ENCODE measurements at regions of chr13 and their contacts with region 1.

Region 1: GRCh38 chr13:32639502-32640105 is 53.4 kb downstream of the PDS5B start:
- DNase-seq: no peak
- ATAC-seq: peak; percentile 79
- H3K4me3 Mint-ChIP-seq: no peak overlapping the region
- H3K27ac Mint-ChIP-seq: no peak overlapping the region
- H3K4me1 Mint-ChIP-seq: peaks cover 42% of the 10 kb centered on the region
- H3K27me3 Mint-ChIP-seq: no peaks in the 10 kb centered on the region
- CTCF ChIP-seq: no peak

Region 2: GRCh38 chr13:32381539-32381938 is 258.1 kb before region 1 on chr13:
- CTCF ChIA-PET with region 1: no interaction called
- POLR2A ChIA-PET with region 1: no interaction called
- intact Hi-C with region 1: loop called (anchors 5 kb)
- DNase-seq: no peak
- ATAC-seq: peak; percentile 37
- H3K4me3 Mint-ChIP-seq: no peak overlapping the region
- H3K27ac Mint-ChIP-seq: no peak overlapping the region
- H3K4me1 Mint-ChIP-seq: no peaks in the 10 kb centered on the region
- H3K27me3 Mint-ChIP-seq: no peaks in the 10 kb centered on the region
- CTCF ChIP-seq: no peak

Region 3: DNA sequence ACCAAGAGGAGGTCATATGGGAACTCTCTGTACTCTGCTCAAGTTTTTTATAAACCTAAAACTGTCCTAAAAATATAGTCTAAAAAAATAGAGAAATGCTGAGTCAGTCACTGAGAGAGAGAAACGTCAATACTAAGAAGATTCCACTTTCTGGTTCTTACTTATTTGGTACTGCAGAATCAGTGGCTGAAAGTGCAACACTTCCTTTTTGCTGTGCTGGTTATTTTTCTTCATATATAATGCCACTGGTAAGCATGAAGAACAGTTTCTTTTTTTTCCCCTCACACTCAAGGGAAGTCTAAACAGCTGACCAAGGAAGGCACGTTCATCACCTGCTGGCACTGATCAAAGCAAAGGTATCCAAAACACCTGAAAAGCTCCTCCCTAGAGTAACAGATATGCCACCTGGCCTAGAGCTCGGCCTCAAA is 167.4 kb before region 1 on chr13:
- CTCF ChIA-PET with region 1: no interaction called
- POLR2A ChIA-PET with region 1: no interaction called
- intact Hi-C with region 1: loop called (anchors 2 kb)
- DNase-seq: no peak
- ATAC-seq: no peak
- H3K4me3 Mint-ChIP-seq: no peak overlapping the region
- H3K27ac Mint-ChIP-seq: no peak overlapping the region
- H3K4me1 Mint-ChIP-seq: no peaks in the 10 kb centered on the region
- H3K27me3 Mint-ChIP-seq: no peaks in the 10 kb centered on the region
- CTCF ChIP-seq: no peak

Region 4: GRCh38 chr13:32669030-32669646 is 29.5 kb after region 1 on chr13:
- CTCF ChIA-PET with region 1: interaction called, 3 read pairs
- POLR2A ChIA-PET with region 1: no interaction called
- intact Hi-C with region 1: loop called (anchors 2 kb)
- DNase-seq: no peak
- ATAC-seq: no peak
- H3K4me3 Mint-ChIP-seq: no peak overlapping the region
- H3K27ac Mint-ChIP-seq: no peak overlapping the region
- H3K4me1 Mint-ChIP-seq: peaks cover 3% of the 10 kb centered on the region
- H3K27me3 Mint-ChIP-seq: no peaks in the 10 kb centered on the region
- CTCF ChIP-seq: no peak

Measured in activated B cell treated with CpG ODN at 0.5 μM for 24 hours (primary cell).